ENCODE measurements at regions of chr10 and their contacts with region 1.

Region 1: DNA sequence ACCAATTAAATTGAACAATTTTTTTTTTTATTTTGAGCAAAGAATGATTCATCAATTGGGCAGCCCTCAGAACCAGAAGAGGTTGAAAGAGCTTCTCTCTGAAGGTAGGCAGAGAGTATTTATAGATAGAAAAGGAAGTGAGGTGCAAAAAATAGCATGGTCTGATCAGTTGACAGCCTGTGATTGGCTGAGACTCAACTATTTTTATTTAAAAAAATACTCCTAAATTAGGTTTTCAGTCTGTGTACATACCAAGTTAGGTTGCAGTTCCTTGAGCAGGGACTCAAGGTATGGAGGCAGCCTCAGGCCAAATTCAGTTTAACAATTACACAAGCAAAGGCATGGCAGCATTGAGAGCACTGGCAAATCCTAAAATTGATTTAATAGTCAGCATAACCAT is 1074.7 kb downstream of the SORCS1 start:
- DNase-seq: no peak
- H3K4me3 ChIP-seq: no peak overlapping the region
- H3K27ac ChIP-seq: no peak overlapping the region
- H3K27me3 ChIP-seq: no peaks in the 10 kb centered on the region
- CTCF ChIP-seq: no peak

Region 2: GRCh38 chr10:106053061-106053460 is 36.8 kb before region 1 on chr10:
- CTCF ChIA-PET with region 1: interaction called, 11 read pairs
- POLR2A ChIA-PET with region 1: no interaction called
- DNase-seq: no peak
- H3K4me3 ChIP-seq: no peak overlapping the region
- H3K27ac ChIP-seq: no peak overlapping the region
- H3K27me3 ChIP-seq: no peaks in the 10 kb centered on the region
- CTCF ChIP-seq: no peak